Colonic mucosa (tissue), 4 donors: ENCODE measurements at regions of chr9 and their contacts with region 1.

Region 1: DNA sequence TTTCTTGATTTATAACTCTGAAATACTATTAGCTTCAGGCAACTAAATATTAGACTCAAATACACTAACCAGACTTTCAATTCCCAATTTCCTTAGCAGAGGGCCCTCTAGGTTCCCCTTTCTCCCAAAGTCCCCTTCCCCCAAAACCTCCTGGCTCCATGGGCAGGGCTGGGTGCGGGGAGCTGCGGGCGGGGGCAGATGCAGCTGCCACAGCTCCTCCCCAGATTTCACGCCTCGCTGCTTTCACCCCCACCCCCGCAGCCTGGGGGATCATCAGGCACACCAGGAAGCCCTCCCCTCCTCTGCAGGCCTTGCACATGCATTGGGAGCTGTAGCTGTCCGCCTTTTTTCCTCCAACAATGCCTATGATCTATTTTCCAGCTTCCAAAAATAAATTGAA is 82.8 kb upstream of the SPATA31C2 start:
- DNase-seq: no peak
- H3K4me3 ChIP-seq: no peak overlapping the region
- H3K27ac ChIP-seq: no peak overlapping the region
- H3K4me1 ChIP-seq: no peaks in the 10 kb centered on the region
- H3K27me3 ChIP-seq: no peaks in the 10 kb centered on the region
- CTCF ChIP-seq: no peak

Region 2: DNA sequence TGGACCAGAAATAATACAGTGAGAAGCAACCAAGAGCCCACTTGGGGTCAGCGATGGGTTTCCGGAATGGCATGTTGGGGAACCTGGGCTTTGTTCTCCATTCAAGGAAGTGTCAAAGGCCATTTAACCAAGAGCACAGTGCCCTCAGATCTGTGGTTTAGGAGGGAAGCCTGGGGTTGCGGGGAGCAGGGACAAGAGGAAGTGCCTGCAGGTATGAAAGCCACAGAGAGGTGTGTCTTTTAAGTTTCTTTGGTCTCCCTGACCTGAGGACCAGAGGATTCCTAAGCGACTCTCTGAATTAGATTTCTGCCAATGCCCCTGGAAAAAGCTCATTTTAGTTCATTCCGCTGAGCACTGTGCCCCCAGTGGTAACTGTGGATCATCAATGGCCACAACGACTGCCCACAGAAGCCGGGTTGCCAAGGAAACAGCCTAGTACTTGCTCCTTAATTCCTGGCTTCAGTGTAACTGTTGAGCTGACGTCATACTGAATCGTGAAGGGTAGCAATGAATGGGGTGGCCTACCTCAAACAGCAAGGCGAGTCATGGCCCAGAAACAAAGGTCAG is 59.8 kb after region 1 on chr9:
- intact Hi-C with region 1: loop called (anchors 10 kb)
- DNase-seq: no peak
- H3K4me3 ChIP-seq: no peak overlapping the region
- H3K27ac ChIP-seq: no peak overlapping the region
- H3K4me1 ChIP-seq: no peaks in the 10 kb centered on the region
- H3K27me3 ChIP-seq: no peaks in the 10 kb centered on the region
- CTCF ChIP-seq: no peak

Region 3: GRCh38 chr9:88378317-88378716 is 157.2 kb after region 1 on chr9:
- intact Hi-C with region 1: no loop called
- DNase-seq: no peak
- H3K4me3 ChIP-seq: no peak overlapping the region
- H3K27ac ChIP-seq: no peak overlapping the region
- H3K4me1 ChIP-seq: no peaks in the 10 kb centered on the region
- H3K27me3 ChIP-seq: no peaks in the 10 kb centered on the region
- CTCF ChIP-seq: no peak